Head of caudate nucleus (tissue), 42 donors: ENCODE measurements at regions of chr10 and their contacts with region 1.

Region 1: DNA sequence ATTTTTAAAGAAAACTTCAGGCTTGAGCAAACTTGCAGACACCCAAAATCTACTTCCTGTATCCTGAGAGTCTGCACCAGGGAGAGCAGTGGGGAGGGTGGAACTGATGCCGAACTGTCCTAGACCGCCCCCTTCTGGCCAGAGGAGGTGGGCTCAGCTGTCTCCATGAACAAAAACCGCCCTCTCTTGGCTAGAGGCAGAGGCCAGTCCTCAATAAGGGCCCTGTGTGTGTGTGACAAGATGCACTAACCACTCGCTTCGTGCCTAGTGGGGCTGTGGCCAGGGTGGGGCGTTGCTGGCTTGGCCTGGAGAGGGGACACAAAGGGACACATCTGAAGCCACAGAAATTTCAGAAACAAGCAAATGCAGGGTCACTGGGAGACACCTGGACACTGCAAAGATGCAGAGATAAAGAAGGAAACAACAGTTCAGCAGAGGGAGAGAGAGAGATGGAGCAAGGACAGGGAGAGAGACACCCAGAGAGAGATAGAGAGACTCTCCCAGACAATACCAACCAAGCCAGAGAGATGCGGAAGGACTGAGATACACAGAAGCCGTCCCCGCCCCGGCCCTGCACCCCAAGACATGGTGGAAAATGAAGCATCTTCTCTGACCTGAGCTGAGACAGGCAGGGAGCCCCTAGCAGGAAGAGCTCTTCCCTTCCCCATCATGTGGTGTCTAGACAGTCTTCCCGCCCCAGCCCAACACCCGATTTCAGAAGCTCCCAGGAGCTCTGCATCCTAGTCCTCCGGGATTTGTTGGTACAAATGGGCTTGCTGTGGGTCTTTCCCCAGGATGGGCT is 22.7 kb upstream of the FXYD4 start:
- DNase-seq: peak; percentile 86 to 98 (median 94)

Region 2: GRCh38 chr10:43076876-43077420 is 271.8 kb before region 1 on chr10 and contains the start of gene RET:
- intact Hi-C with region 1: no loop called
- DNase-seq: peak in 24 of 42 donors; percentile 11 to 69 (median 33)

Region 3: DNA sequence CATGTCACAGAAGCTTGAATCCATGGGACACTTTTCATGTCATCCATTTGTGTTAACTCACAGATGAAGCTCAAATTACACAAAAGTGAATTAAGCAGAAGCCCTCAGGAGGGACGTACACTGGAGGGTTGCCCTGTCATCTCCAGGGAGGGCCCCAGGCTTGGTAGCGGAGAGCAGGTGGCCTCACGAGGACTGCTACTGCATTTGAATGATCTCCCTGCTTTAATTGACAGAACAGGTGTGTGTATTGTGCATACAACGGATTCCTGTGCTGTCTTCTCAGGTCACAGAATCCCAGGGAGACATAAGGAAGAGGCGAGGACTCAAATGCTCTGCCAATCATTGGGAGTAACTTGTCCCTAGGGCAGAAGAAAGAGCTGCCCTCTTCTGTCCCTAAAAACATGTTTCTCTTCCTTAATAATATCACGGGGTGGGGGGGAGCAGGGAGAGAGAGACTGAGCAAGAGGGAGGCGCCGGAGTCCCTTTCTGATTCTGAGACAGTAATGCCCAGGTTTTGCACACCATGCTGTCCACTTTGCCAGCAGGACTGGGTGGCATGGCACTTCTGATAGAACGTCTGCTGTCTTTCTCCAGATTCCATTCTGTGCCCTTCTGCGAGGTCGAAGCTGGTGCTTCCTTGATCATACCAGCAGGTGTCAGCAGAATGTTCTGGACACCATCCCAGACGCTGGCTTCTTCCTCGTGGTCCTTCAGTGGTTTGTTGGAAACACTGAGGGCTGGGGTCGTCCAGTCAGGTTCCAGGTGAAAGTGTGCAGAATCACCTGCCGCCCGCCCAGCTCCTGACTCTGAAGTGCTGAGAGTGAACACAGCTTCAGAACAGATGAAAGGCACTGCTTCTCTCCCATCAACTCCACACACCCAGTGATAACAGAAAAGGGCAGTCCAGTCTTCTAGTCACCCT is 55.7 kb before region 1 on chr10:
- intact Hi-C with region 1: loop called (anchors 1 kb)
- DNase-seq: peak; percentile 34 to 87 (median 72)

Region 4: DNA sequence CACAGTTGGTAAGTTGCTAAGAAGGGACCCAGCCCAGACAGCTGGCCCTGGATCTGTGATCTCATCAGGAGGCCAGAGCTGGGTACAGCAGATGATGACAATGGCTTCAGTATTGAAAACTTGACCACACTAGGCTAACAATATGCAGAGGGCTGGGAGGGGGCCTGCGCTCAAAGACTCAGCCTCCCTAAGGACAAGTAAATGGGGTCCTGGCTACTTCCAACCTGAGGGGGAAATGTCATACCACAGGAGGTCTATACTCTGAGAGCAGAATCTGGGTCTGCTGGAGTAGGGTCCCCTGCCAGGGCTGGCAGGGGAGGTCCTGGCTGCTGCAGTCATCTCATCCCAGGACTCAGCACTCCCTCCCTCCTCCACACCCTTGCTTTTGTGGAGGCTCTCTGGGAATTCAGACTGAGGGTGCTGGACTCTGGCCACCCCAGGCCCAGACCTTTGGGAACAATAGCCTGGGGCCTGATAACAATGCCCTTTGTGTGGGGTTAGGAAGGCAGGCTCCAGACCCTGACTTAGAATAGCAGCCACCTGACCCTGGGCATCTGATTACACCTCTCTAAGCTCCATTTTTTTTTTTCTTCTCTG is 24.2 kb after region 1 on chr10:
- intact Hi-C with region 1: loop called (anchors 2 kb)
- DNase-seq: peak; percentile 51 to 94 (median 82)